ENCODE measurements at regions of chr6 and their contacts with region 1.

Region 1: GRCh38 chr6:46376562-46377061 is 114.6 kb downstream of the RCAN2 start:
- DNase-seq: peak; percentile 87
- H3K4me3 ChIP-seq: peak overlapping the region; percentile 51
- H3K27ac ChIP-seq: peak overlapping the region; percentile 82
- H3K4me1 ChIP-seq: peaks cover 56% of the 10 kb centered on the region
- CTCF ChIP-seq: no peak

Region 2: GRCh38 chr6:46129629-46130511 is 246.7 kb before region 1 on chr6 and contains the start of gene ENPP4:
- CTCF ChIA-PET with region 1: interaction called, 3 read pairs
- POLR2A ChIA-PET with region 1: interaction called, 4 read pairs
- intact Hi-C with region 1: loop called (anchors 5 kb)
- DNase-seq: peak; percentile 96
- H3K4me3 ChIP-seq: peak within 1 kb of the TSS; percentile 84
- H3K27ac ChIP-seq: peak within 1 kb of the TSS; percentile 57
- H3K4me1 ChIP-seq: peaks cover 18% of the 10 kb centered on the region
- CTCF ChIP-seq: peak; percentile 22; the same call in 1 of the 2 replicates
- total RNA-seq, gene ENPP4: 5.7 and 7.1 TPM in 2 replicates

Region 3: DNA sequence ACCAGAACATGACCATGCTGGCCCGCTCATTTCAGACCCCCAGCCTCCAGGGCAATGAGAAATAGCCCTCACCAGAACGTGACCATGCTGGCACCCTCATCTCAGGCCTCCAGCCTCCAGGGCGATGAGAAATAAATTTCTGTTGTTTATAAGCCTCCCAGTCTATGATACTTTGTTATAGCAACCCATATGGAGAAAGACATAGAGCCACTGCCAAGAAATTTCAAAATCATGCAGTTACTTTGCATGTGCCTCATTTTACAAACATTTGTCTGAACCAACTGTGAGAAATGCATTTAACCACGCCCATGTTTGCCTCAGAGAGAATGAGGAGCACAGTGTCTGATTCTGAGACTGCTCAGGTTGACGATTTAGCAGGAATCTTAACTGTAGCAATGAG is 260.5 kb after region 1 on chr6:
- CTCF ChIA-PET with region 1: no interaction called
- POLR2A ChIA-PET with region 1: no interaction called
- intact Hi-C with region 1: loop called (anchors 5 kb)
- DNase-seq: peak; percentile 78
- H3K4me3 ChIP-seq: peak overlapping the region; percentile 66
- H3K27ac ChIP-seq: peak overlapping the region; percentile 97
- H3K4me1 ChIP-seq: peaks cover 98% of the 10 kb centered on the region
- CTCF ChIP-seq: no peak